ENCODE measurements at regions of chr1 and their contacts with region 1.

Region 1: DNA sequence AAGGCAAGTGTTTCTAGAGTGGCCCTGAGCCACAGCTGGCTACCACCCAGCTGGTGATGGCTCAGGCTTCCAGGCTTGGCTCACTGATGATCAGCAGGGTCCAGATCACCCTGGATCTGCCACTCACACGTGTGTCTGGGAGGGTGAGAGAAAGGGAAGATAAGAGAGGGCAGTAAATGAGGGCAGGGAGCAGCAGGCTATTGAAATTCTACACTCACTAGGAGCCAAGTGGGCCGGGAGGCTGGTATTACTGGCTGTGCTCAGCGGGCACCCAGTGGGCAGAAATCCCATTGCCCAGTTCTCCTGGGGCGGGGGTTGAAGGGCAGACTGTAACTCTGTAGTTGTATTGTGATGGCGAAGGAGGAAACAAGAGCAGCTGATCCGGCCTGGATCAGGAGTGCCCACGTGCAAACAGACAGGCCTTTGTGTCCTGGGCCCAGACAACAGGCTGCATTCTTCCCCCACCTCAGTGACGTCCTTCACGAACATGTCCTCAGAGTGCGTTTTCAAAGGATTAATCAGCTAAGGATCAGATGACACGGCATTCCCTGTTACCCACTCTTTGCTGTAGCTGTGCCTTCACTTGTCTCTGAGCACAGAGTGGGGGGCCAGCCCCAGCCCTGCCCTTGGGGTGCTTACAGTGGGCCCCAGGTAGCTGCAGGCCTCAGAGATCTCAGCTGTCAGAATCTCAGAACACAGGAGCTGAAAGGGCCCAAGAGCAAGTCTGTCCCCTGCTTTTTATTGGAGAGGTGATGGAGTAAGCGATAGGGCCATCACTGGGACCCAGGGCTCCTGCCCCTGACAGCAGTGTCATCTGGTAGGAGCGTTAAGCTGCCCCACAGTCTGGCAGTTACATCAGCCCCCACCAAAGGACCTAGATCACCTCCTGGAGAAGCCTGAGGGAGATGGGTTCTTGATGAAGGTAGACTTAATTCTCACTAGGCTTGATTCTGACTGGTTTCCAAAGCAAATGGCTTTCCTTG is 60.5 kb downstream of the ATP1A1 start:
- DNase-seq: no peak
- H3K4me3 ChIP-seq: no peak overlapping the region
- H3K4me3 Mint-ChIP-seq: peak overlapping the region; percentile 15
- H3K27ac Mint-ChIP-seq: peak overlapping the region; percentile 48
- H3K4me1 ChIP-seq: peaks cover 27% of the 10 kb centered on the region
- H3K4me1 Mint-ChIP-seq: peaks cover 24% of the 10 kb centered on the region
- H3K27me3 ChIP-seq: no peaks in the 10 kb centered on the region
- H3K27me3 Mint-ChIP-seq: no peaks in the 10 kb centered on the region
- CTCF ChIP-seq: no peak

Region 2: DNA sequence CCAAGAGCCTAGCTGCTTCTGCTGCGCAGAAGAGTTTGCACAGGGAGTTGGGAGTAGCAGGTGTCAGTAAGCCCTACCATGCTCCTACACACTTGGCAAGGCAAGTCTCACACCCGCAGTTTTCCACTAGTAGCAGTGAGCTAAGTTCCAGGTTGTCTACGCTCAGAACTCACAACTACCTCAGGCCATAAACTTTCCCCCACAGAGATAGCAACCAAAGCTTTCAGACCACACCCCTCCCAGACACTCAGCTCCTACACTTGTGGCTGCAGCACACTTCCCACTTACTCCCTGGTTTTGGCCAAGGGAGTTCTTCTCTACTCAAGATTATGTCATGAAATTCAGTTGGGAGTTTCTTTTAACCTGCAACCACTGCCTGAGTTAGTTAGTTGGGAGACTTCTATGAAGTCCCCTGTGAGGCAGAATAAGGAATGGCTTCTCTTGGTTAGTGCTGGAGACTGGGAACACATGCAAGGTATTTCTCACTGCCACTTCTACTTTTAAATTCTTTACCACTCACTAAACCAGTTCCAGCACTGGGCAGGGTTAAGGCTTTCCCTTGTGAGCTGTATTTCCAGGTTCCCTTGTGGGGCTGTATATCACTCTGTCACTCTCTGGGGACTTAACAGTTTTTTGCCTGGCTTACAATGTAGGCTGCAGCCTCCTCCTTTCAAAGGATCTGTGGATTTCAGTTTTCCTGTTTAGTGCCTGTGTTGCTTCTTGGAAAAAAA is 340.6 kb before region 1 on chr1:
- CTCF ChIA-PET with region 1: no interaction called
- POLR2A ChIA-PET with region 1: no interaction called
- intact Hi-C with region 1: no loop called
- DNase-seq: no peak
- H3K4me3 ChIP-seq: no peak overlapping the region
- H3K4me3 Mint-ChIP-seq: no peak overlapping the region
- H3K27ac Mint-ChIP-seq: peak overlapping the region; percentile 67
- H3K4me1 ChIP-seq: no peaks in the 10 kb centered on the region
- H3K4me1 Mint-ChIP-seq: peaks cover 4% of the 10 kb centered on the region
- H3K27me3 ChIP-seq: no peaks in the 10 kb centered on the region
- H3K27me3 Mint-ChIP-seq: no peaks in the 10 kb centered on the region
- CTCF ChIP-seq: no peak

Region 3: DNA sequence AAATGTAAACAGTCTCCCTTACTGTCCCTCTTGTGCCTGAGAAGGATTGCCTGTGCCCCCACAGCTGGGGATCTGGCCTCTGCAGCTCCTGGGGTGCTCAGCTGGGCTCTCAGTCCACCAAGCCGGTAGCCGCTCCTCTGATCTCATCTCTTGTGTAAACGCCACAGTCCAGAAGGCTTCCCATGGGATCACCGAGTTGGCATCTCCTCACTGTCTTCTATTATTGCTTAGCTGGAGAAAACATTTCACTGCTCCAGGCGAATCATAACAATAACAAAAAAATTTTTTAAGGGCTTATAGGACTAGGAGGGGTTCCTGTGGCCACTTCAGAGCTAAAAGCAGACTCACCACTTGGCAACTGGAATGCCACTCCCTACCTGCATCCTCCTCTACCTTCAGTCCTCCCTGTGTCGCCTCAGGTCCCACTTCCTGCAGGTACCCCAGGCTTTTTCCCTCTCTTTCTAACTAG is 15.3 kb after region 1 on chr1:
- CTCF ChIA-PET with region 1: no interaction called
- POLR2A ChIA-PET with region 1: no interaction called
- intact Hi-C with region 1: loop called (anchors 2 kb)
- DNase-seq: no peak
- H3K4me3 ChIP-seq: no peak overlapping the region
- H3K4me3 Mint-ChIP-seq: no peak overlapping the region
- H3K27ac Mint-ChIP-seq: peak overlapping the region; percentile 77
- H3K4me1 ChIP-seq: peaks cover 58% of the 10 kb centered on the region
- H3K4me1 Mint-ChIP-seq: peaks cover 31% of the 10 kb centered on the region
- H3K27me3 ChIP-seq: no peaks in the 10 kb centered on the region
- H3K27me3 Mint-ChIP-seq: no peaks in the 10 kb centered on the region
- CTCF ChIP-seq: no peak

Region 4: GRCh38 chr1:116559304-116559761 is 125.8 kb after region 1 on chr1:
- CTCF ChIA-PET with region 1: no interaction called
- POLR2A ChIA-PET with region 1: no interaction called
- intact Hi-C with region 1: no loop called
- DNase-seq: no peak
- H3K4me3 ChIP-seq: no peak overlapping the region
- H3K4me3 Mint-ChIP-seq: no peak overlapping the region
- H3K27ac Mint-ChIP-seq: no peak overlapping the region
- H3K4me1 ChIP-seq: no peaks in the 10 kb centered on the region
- H3K4me1 Mint-ChIP-seq: no peaks in the 10 kb centered on the region
- H3K27me3 ChIP-seq: no peaks in the 10 kb centered on the region
- H3K27me3 Mint-ChIP-seq: no peaks in the 10 kb centered on the region
- CTCF ChIP-seq: no peak